Activated B cell treated with CpG ODN at 0.5 μM for 24 hours (primary cell): ENCODE measurements at regions of chr2 and their contacts with region 1.

Region 1: GRCh38 chr2:134692499-134692898 is 26.3 kb downstream of the TMEM163 start:
- DNase-seq: no peak
- ATAC-seq: peak; percentile 84
- H3K4me3 Mint-ChIP-seq: no peak overlapping the region
- H3K27ac Mint-ChIP-seq: no peak overlapping the region
- H3K4me1 Mint-ChIP-seq: peaks cover 9% of the 10 kb centered on the region
- H3K27me3 Mint-ChIP-seq: no peaks in the 10 kb centered on the region
- CTCF ChIP-seq: no peak

Region 2: DNA sequence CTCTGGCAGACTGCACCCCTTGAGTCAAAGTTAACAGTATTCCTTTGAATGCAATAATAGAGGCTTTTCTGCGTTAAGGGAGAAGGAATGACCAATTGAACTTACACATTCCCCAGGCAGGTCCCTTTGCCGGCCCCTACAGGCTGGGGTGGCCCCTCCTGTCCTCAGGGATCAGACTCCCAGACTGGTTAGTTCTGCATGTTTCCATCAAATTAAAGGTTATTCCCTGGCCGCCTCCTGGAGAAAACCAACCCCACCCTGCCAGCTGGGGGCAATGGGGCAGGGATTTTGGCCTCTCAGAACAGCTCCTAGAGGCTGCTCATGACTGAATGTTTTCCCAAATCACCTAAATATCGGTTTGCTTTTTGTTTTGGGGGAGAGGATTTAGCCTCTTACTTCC is 239.0 kb before region 1 on chr2:
- CTCF ChIA-PET with region 1: no interaction called
- POLR2A ChIA-PET with region 1: no interaction called
- intact Hi-C with region 1: loop called (anchors 1 kb)
- DNase-seq: no peak
- ATAC-seq: no peak
- H3K4me3 Mint-ChIP-seq: no peak overlapping the region
- H3K27ac Mint-ChIP-seq: no peak overlapping the region
- H3K4me1 Mint-ChIP-seq: no peaks in the 10 kb centered on the region
- H3K27me3 Mint-ChIP-seq: no peaks in the 10 kb centered on the region
- CTCF ChIP-seq: no peak

Region 3: GRCh38 chr2:134460583-134460998 is 231.9 kb before region 1 on chr2:
- CTCF ChIA-PET with region 1: no interaction called
- POLR2A ChIA-PET with region 1: no interaction called
- intact Hi-C with region 1: loop called (anchors 1 kb)
- DNase-seq: no peak
- ATAC-seq: peak; percentile 88
- H3K4me3 Mint-ChIP-seq: no peak overlapping the region
- H3K27ac Mint-ChIP-seq: no peak overlapping the region
- H3K4me1 Mint-ChIP-seq: peaks cover 6% of the 10 kb centered on the region
- H3K27me3 Mint-ChIP-seq: no peaks in the 10 kb centered on the region
- CTCF ChIP-seq: no peak

Region 4: GRCh38 chr2:134466141-134466540 is 226.4 kb before region 1 on chr2:
- CTCF ChIA-PET with region 1: no interaction called
- POLR2A ChIA-PET with region 1: interaction called, 5 read pairs
- intact Hi-C with region 1: loop called (anchors 1 kb)
- DNase-seq: no peak
- ATAC-seq: no peak
- H3K4me3 Mint-ChIP-seq: no peak overlapping the region
- H3K27ac Mint-ChIP-seq: no peak overlapping the region
- H3K4me1 Mint-ChIP-seq: peaks cover 2% of the 10 kb centered on the region
- H3K27me3 Mint-ChIP-seq: no peaks in the 10 kb centered on the region
- CTCF ChIP-seq: no peak

Region 5: DNA sequence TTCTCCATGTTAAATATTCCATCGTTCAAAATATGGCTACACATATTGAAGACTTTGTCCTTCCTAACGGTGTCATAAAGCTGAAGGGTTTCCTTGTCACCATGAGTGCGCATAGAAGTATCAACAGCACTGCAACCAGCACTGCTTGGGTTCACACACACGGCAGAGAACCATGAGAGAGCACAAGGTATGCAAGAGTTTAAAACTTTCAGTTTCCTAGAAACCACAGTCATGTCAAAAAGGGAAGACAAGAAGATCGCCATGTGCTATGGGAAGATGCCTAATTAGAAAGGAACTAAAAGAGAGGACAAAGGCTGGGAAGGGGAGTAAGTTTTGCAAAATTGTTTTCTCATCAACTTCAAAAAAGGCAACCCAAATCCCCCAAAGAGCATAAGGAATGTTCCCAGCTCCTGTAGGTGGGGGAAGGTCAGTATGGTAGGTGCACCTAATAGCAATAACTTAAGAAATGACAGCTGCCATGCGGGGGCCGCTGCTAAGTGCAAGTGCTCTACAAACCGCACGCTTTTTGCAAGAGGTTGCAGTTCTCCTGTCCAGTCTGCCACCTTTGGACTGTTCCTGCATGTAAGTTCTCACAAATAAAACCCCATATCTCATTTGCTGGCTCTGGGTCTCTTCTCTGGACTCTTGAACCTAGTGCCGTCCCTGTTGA is 110.5 kb before region 1 on chr2:
- CTCF ChIA-PET with region 1: no interaction called
- POLR2A ChIA-PET with region 1: no interaction called
- intact Hi-C with region 1: loop called (anchors 5 kb)
- DNase-seq: no peak
- ATAC-seq: peak; percentile 26
- H3K4me3 Mint-ChIP-seq: peak overlapping the region; percentile 22
- H3K27ac Mint-ChIP-seq: peak overlapping the region; percentile 80
- H3K4me1 Mint-ChIP-seq: peaks cover 39% of the 10 kb centered on the region
- H3K27me3 Mint-ChIP-seq: no peaks in the 10 kb centered on the region
- CTCF ChIP-seq: no peak

Region 6: GRCh38 chr2:134623796-134624195 is 68.7 kb before region 1 on chr2:
- CTCF ChIA-PET with region 1: no interaction called
- POLR2A ChIA-PET with region 1: no interaction called
- intact Hi-C with region 1: loop called (anchors 2 kb)
- DNase-seq: no peak
- ATAC-seq: peak; percentile 69
- H3K4me3 Mint-ChIP-seq: peak overlapping the region; percentile 71
- H3K27ac Mint-ChIP-seq: peak overlapping the region; percentile 91
- H3K4me1 Mint-ChIP-seq: peaks cover 28% of the 10 kb centered on the region
- H3K27me3 Mint-ChIP-seq: no peaks in the 10 kb centered on the region
- CTCF ChIP-seq: no peak

Region 7: GRCh38 chr2:134657637-134658250 is 34.8 kb before region 1 on chr2:
- CTCF ChIA-PET with region 1: no interaction called
- POLR2A ChIA-PET with region 1: no interaction called
- intact Hi-C with region 1: no loop called
- DNase-seq: no peak
- ATAC-seq: no peak
- H3K4me3 Mint-ChIP-seq: no peak overlapping the region
- H3K27ac Mint-ChIP-seq: no peak overlapping the region
- H3K4me1 Mint-ChIP-seq: peaks cover 3% of the 10 kb centered on the region
- H3K27me3 Mint-ChIP-seq: no peaks in the 10 kb centered on the region
- CTCF ChIP-seq: no peak

Region 8: GRCh38 chr2:134679745-134680144 is 12.8 kb before region 1 on chr2:
- CTCF ChIA-PET with region 1: no interaction called
- POLR2A ChIA-PET with region 1: no interaction called
- intact Hi-C with region 1: no loop called
- DNase-seq: no peak
- ATAC-seq: peak; percentile 87
- H3K4me3 Mint-ChIP-seq: peak overlapping the region; percentile 68
- H3K27ac Mint-ChIP-seq: peak overlapping the region; percentile 14
- H3K4me1 Mint-ChIP-seq: peaks cover 32% of the 10 kb centered on the region
- H3K27me3 Mint-ChIP-seq: no peaks in the 10 kb centered on the region
- CTCF ChIP-seq: no peak

Region 9: DNA sequence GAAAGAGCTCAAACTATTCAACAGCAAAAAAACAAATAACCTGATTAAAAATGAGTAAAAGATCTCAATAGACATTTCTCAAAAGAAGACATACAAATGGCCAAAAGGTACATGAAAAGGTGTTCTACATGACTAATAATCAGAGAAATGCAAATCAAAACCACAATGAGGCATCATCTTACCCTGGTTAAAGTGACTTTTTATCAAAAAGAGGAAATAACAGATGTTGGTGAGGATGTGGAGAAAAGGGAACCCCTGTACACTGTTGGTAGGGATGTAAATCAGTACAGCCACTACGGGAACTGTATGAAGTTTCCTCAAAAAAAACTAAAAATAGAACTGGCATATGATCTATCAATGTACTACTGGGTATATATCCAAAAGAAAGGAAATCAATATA is 66.1 kb after region 1 on chr2:
- CTCF ChIA-PET with region 1: no interaction called
- POLR2A ChIA-PET with region 1: no interaction called
- intact Hi-C with region 1: no loop called
- DNase-seq: no peak
- ATAC-seq: peak; percentile 95
- H3K4me3 Mint-ChIP-seq: peak overlapping the region; percentile 16
- H3K27ac Mint-ChIP-seq: peak overlapping the region; percentile 74
- H3K4me1 Mint-ChIP-seq: peaks cover 30% of the 10 kb centered on the region
- H3K27me3 Mint-ChIP-seq: no peaks in the 10 kb centered on the region
- CTCF ChIP-seq: no peak

Region 10: GRCh38 chr2:135590619-135591260 is 898.2 kb after region 1 on chr2:
- CTCF ChIA-PET with region 1: no interaction called
- POLR2A ChIA-PET with region 1: no interaction called
- intact Hi-C with region 1: no loop called
- DNase-seq: no peak
- ATAC-seq: no peak
- H3K4me3 Mint-ChIP-seq: no peak overlapping the region
- H3K27ac Mint-ChIP-seq: no peak overlapping the region
- H3K4me1 Mint-ChIP-seq: peaks cover 11% of the 10 kb centered on the region
- H3K27me3 Mint-ChIP-seq: no peaks in the 10 kb centered on the region
- CTCF ChIP-seq: no peak